CD4-positive, alpha-beta T cell (primary cell): ENCODE measurements at regions of chr22 and their contacts with region 1.

Region 1: DNA sequence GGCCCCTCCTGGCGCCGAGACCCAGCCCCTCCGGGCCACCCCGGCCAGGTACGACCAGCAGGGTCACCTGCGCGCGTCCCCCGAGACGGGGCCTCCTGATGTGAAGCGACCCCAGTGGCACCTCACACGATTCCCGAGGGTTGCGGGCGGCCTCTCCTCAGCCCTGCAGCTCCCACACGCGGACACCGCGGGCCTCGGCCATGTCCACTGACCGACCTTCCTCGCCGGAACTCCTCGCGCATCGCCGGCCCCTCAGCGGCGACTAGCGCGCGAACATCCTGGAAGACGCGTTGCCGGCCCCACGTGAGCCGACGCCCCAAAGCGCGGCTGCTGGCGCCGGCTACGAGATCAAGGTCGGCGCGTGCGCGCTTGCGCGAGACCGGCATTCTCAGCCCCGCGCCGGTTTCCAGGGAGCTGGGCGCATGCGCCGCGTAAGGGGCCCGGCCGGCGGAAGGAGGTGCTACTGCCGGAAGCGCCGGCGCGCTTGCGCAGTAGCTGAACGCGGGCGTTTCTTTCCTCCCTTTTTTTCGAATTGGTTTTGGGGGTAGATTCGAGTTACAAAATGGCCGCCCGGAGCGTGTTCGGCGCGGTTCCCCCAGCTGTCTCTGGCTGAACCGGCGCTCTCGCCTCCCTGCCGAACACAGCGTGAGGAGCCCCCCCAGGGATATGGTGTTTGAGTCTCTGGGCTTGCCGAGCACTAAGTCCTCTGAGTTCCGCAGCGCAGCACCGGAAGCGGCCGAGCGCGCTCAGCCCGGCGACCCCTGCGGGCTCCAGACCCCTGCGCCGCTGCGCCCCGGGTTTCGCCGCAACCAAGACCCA is at the start of gene NUP50:
- DNase-seq: peak; percentile 89 to 100 (median 96)
- ATAC-seq: peak; percentile 77
- H3K4me3 ChIP-seq: peak within 1 kb of the TSS; percentile 80
- H3K4me3 Mint-ChIP-seq: peak within 1 kb of the TSS; percentile 97
- H3K27ac ChIP-seq: peak within 1 kb of the TSS; percentile 84 to 85
- H3K27ac Mint-ChIP-seq: peak within 1 kb of the TSS; percentile 93
- H3K4me1 ChIP-seq: peaks cover 56% of the 10 kb centered on the region
- H3K4me1 Mint-ChIP-seq: peaks cover 71% of the 10 kb centered on the region
- H3K27me3 ChIP-seq: no peaks in the 10 kb centered on the region
- H3K27me3 Mint-ChIP-seq: no peaks in the 10 kb centered on the region
- CTCF ChIP-seq: no peak
- total RNA-seq, gene NUP50: 141 TPM

Region 2: GRCh38 chr22:43812149-43812842 is 1351.4 kb before region 1 on chr22 and contains the start of gene EFCAB6:
- CTCF ChIA-PET with region 1: no interaction called
- POLR2A ChIA-PET with region 1: no interaction called
- intact Hi-C with region 1: loop called in 1 of 2 experiments (anchors 10 kb)
- DNase-seq: peak; percentile 80 to 96 (median 86)
- ATAC-seq: peak; percentile 84
- H3K4me3 ChIP-seq: peak within 1 kb of the TSS; percentile 94
- H3K4me3 Mint-ChIP-seq: peak within 1 kb of the TSS; percentile 96
- H3K27ac ChIP-seq: peak within 1 kb of the TSS; percentile 51 to 59
- H3K27ac Mint-ChIP-seq: peak within 1 kb of the TSS; percentile 88
- H3K4me1 ChIP-seq: peaks cover 17% of the 10 kb centered on the region
- H3K4me1 Mint-ChIP-seq: peaks cover 27% of the 10 kb centered on the region
- H3K27me3 ChIP-seq: no peaks in the 10 kb centered on the region
- H3K27me3 Mint-ChIP-seq: no peaks in the 10 kb centered on the region
- CTCF ChIP-seq: no peak
- total RNA-seq, gene EFCAB6: 0.17 to 0.36 TPM

Region 3: DNA sequence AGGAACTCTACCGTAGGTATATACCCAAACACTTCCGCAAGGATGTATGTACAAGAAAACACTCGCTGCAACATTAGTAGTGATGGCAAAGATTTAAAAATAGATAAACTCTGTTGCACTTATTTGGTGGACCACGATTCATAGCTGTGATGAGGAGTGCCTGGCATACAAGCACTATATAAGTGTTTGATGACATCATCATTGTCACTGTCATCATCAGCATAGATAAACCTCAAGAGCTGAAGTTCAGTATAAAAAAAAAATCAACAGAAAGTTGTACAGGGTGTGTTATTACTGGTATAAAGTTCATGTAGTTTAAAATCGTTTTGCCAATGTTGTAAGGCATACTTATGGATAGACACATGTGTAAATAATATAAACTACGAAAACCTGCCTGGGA is 24.0 kb before region 1 on chr22:
- CTCF ChIA-PET with region 1: no interaction called
- POLR2A ChIA-PET with region 1: no interaction called
- intact Hi-C with region 1: no loop called
- DNase-seq: no peak
- ATAC-seq: no peak
- H3K4me3 ChIP-seq: no peak overlapping the region
- H3K4me3 Mint-ChIP-seq: no peak overlapping the region
- H3K27ac ChIP-seq: no peak overlapping the region
- H3K27ac Mint-ChIP-seq: no peak overlapping the region
- H3K4me1 ChIP-seq: no peaks in the 10 kb centered on the region
- H3K4me1 Mint-ChIP-seq: no peaks in the 10 kb centered on the region
- H3K27me3 ChIP-seq: no peaks in the 10 kb centered on the region
- H3K27me3 Mint-ChIP-seq: no peaks in the 10 kb centered on the region
- CTCF ChIP-seq: no peak

Region 4: GRCh38 chr22:45179276-45180044 is 15.8 kb after region 1 on chr22:
- CTCF ChIA-PET with region 1: interaction called, 3 read pairs
- POLR2A ChIA-PET with region 1: interaction called, 78 read pairs
- intact Hi-C with region 1: loop called in 1 of 2 experiments (anchors 2 kb)
- DNase-seq: peak in 12 of 14 experiments; percentile 22 to 79 (median 50)
- ATAC-seq: peak; percentile 97
- H3K4me3 ChIP-seq: no peak overlapping the region
- H3K4me3 Mint-ChIP-seq: peak overlapping the region; percentile 53
- H3K27ac ChIP-seq: peak overlapping the region; percentile 3 to 66
- H3K27ac Mint-ChIP-seq: peak overlapping the region; percentile 87
- H3K4me1 ChIP-seq: peaks cover 38% of the 10 kb centered on the region
- H3K4me1 Mint-ChIP-seq: peaks cover 64% of the 10 kb centered on the region
- H3K27me3 ChIP-seq: no peaks in the 10 kb centered on the region
- H3K27me3 Mint-ChIP-seq: no peaks in the 10 kb centered on the region
- CTCF ChIP-seq: peak; percentile 21

Region 5: GRCh38 chr22:45240810-45241631 is 77.4 kb after region 1 on chr22 and contains the start of gene KIAA0930:
- CTCF ChIA-PET with region 1: no interaction called
- POLR2A ChIA-PET with region 1: interaction called, 4 read pairs
- intact Hi-C with region 1: loop called in 1 of 2 experiments (anchors 2 kb)
- DNase-seq: peak; percentile 70 to 89 (median 76)
- ATAC-seq: peak; percentile 62
- H3K4me3 ChIP-seq: peak within 1 kb of the TSS; percentile 72
- H3K4me3 Mint-ChIP-seq: peak within 1 kb of the TSS; percentile 94
- H3K27ac ChIP-seq: peak within 1 kb of the TSS; percentile 32 to 52
- H3K27ac Mint-ChIP-seq: peak within 1 kb of the TSS; percentile 90
- H3K4me1 ChIP-seq: peaks cover 39% of the 10 kb centered on the region
- H3K4me1 Mint-ChIP-seq: peaks cover 19% of the 10 kb centered on the region
- H3K27me3 ChIP-seq: no peaks in the 10 kb centered on the region
- H3K27me3 Mint-ChIP-seq: no peaks in the 10 kb centered on the region
- CTCF ChIP-seq: no peak
- total RNA-seq, gene KIAA0930: 6.7 to 7.4 TPM

Region 6: GRCh38 chr22:45309472-45310227 is 146.0 kb after region 1 on chr22 and contains the start of gene FAM118A:
- CTCF ChIA-PET with region 1: no interaction called
- POLR2A ChIA-PET with region 1: interaction called, 3 read pairs
- intact Hi-C with region 1: loop called in 1 of 2 experiments (anchors 5 kb)
- DNase-seq: peak; percentile 91 to 99 (median 96)
- ATAC-seq: peak; percentile 84
- H3K4me3 ChIP-seq: peak within 1 kb of the TSS; percentile 93
- H3K4me3 Mint-ChIP-seq: peak within 1 kb of the TSS; percentile 85
- H3K27ac ChIP-seq: peak within 1 kb of the TSS; percentile 77 to 87
- H3K27ac Mint-ChIP-seq: peak within 1 kb of the TSS; percentile 95
- H3K4me1 ChIP-seq: peaks cover 55% of the 10 kb centered on the region
- H3K4me1 Mint-ChIP-seq: peaks cover 49% of the 10 kb centered on the region
- H3K27me3 ChIP-seq: no peaks in the 10 kb centered on the region
- H3K27me3 Mint-ChIP-seq: no peaks in the 10 kb centered on the region
- CTCF ChIP-seq: no peak
- total RNA-seq, gene FAM118A: 159 to 161 TPM